Activated naive CD4-positive, alpha-beta T cell treated with anti-CD3 and anti-CD28 coated beads, Interleukin-2, amount 10 ng/mL, durations not matched to agents 7 days and 5 days (primary cell): ENCODE measurements at regions of chr20 and their contacts with region 1.

Region 1: DNA sequence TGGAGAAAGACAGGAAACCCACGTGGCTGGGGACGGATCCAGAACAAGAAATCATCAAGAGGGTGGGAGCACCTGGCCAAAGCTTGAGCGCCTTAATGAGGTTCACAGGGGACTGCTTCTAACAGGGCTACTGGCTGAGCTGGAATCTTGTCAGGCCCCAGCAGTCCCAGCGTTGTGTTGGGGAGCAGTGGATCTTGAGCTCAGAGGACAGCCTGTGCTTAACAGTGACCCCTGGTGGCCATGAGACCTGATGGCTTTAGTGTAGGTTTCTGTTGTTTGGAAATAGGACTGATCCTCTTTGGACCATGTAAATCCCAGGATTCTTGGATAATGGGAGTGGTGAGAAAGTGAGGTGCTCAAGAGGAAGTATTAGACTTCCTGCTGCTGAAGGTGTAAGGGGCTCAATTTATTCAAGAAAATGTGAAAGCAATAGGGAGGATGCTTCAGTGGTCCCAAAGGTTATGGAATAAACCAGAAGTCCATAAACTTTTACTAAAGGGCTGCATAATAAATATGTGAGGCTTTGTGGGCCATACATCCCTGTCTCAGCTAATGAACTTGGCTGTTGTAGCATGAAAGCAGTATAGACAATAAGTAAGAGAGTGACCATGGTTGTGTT is 216.2 kb downstream of the NFATC2 start:
- DNase-seq: peak; percentile 49
- H3K4me3 Mint-ChIP-seq: no peak overlapping the region
- H3K27ac Mint-ChIP-seq: no peak overlapping the region
- H3K4me1 Mint-ChIP-seq: no peaks in the 10 kb centered on the region
- H3K27me3 Mint-ChIP-seq: peaks cover 17% of the 10 kb centered on the region

Region 2: GRCh38 chr20:50987592-50988210 is 338.6 kb before region 1 on chr20:
- CTCF ChIA-PET with region 1: interaction called, 45 read pairs
- DNase-seq: peak; percentile 71
- H3K4me3 Mint-ChIP-seq: no peak overlapping the region
- H3K27ac Mint-ChIP-seq: no peak overlapping the region
- H3K4me1 Mint-ChIP-seq: no peaks in the 10 kb centered on the region
- H3K27me3 Mint-ChIP-seq: peaks cover 50% of the 10 kb centered on the region

Region 3: DNA sequence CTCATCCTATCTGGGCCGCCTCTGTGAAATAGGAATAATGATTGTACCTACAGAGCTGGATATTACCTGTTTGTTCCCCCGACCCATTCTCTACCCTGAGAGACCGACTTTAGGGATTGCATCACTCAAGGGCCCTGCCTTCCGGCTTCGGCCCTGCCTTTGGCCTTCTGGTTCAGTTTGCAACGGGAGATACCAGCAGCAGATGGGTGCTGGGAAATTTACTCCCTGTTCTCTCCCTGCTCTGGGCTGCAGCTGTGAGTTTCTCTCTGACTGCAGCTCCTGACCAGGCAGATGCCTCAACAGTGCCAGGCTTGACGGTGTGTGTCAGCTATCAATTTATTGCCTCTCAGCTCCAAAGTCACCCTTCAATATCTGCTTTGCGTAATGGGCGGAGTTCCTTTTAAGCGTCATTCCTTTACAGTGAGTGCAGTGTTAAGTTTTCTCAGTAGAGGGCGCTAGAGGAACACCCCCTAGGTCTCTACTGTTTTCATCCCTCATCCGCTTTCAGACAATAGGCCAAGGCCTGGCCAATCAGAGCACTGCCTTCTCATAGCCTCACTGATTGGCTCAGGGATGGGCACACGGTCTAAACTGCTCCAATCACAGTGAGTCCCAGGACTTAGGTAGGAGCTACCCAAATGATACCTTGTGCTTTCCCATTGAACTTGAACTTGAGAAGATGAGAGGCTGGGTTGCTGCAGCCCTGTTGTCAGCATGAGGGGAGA is 333.4 kb before region 1 on chr20:
- CTCF ChIA-PET with region 1: interaction called, 45 read pairs
- DNase-seq: peak; percentile 60
- H3K4me3 Mint-ChIP-seq: no peak overlapping the region
- H3K27ac Mint-ChIP-seq: no peak overlapping the region
- H3K4me1 Mint-ChIP-seq: no peaks in the 10 kb centered on the region
- H3K27me3 Mint-ChIP-seq: peaks cover 38% of the 10 kb centered on the region